ENCODE measurements at regions of chr7 and their contacts with region 1.

Region 1: GRCh38 chr7:127525866-127526480 is 59.4 kb downstream of the GCC1 start:
- DNase-seq: no peak
- H3K4me3 ChIP-seq: no peak overlapping the region
- H3K27ac ChIP-seq: no peak overlapping the region
- H3K4me1 ChIP-seq: no peaks in the 10 kb centered on the region
- H3K27me3 ChIP-seq: 0 out of 2 replicates have a peak, but pooled peaks cover 6% of the 10 kb centered on the region
- CTCF ChIP-seq: no peak
- EP300 ChIP-seq: no peak
- RAD21 ChIP-seq: no peak

Region 2: GRCh38 chr7:127409629-127410028 is 116.3 kb before region 1 on chr7:
- CTCF ChIA-PET with region 1: no interaction called
- POLR2A ChIA-PET with region 1: no interaction called
- DNase-seq: no peak
- H3K4me3 ChIP-seq: no peak overlapping the region
- H3K27ac ChIP-seq: no peak overlapping the region
- H3K4me1 ChIP-seq: no peaks in the 10 kb centered on the region
- H3K27me3 ChIP-seq: no peaks in the 10 kb centered on the region
- CTCF ChIP-seq: peak; percentile 20
- EP300 ChIP-seq: no peak
- RAD21 ChIP-seq: peak; percentile 29

Region 3: GRCh38 chr7:127514499-127514898 is 11.5 kb before region 1 on chr7:
- CTCF ChIA-PET with region 1: interaction called, 19 read pairs
- POLR2A ChIA-PET with region 1: no interaction called
- DNase-seq: peak; percentile 68
- H3K4me3 ChIP-seq: no peak overlapping the region
- H3K27ac ChIP-seq: no peak overlapping the region
- H3K4me1 ChIP-seq: no peaks in the 10 kb centered on the region
- H3K27me3 ChIP-seq: no peaks in the 10 kb centered on the region
- CTCF ChIP-seq: peak; percentile 61
- EP300 ChIP-seq: no peak
- RAD21 ChIP-seq: peak; percentile 87